ENCODE measurements at regions of chr16 and their contacts with region 1.

Region 1: GRCh38 chr16:15894571-15895374 is 6.4 kb upstream of the CEP20 start:
- DNase-seq: no peak
- H3K4me3 ChIP-seq: no peak overlapping the region
- H3K27ac ChIP-seq: no peak overlapping the region
- H3K4me1 ChIP-seq: no peaks in the 10 kb centered on the region
- H3K27me3 ChIP-seq: no peaks in the 10 kb centered on the region
- CTCF ChIP-seq: no peak
- POLR2A ChIP-seq: no peak

Region 2: DNA sequence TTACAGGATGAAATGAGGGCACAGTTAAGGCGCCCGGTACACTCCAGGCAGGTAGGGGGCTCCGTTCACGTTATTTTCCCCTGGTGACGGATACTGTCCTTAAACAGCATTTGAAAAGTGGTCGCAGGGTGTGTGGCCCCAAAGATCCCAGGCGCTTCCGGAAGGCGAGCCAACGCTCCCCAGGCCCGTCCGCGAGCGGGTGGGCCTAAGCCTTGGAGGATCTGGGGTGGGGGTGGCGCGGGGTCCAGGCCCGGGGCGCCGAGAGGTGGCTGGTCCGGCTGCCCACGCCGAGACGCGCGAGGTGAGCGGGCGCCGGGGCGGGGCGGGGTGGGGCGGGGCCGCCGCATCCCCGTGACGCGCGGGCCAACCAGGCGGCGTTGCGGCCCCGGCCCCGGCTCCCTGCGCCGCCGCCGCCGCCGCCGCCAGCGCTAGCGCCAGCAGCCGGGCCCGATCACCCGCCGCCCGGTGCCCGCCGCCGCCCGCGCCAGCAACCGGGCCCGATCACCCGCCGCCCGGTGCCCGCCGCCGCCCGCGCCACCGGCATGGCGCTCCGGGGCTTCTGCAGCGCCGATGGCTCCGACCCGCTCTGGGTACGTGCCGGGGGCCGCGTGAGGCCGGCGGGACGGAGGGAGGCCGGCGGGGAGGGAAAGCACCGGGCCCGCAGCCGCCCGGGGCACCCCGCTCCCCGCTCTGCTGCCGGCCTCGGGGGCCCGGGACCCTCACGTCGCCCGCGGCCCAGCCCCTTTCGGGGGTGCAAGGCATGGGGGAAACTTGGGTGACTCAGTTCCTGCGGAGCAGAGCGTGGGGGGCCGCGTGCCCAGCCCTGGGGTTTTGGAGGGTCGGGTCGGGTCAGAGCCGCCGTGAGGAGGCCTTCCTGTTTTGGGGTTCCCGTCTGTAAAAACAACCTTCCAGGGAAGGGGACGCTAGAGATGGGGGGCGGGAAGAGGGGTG is 54.7 kb after region 1 on chr16 and contains the start of gene ABCC1:
- intact Hi-C with region 1: loop called in 1 of 2 experiments (anchors 5 kb)
- DNase-seq: peak in 5 of 7 donors; percentile 21 to 54 (median 33)
- H3K4me3 ChIP-seq: peak within 1 kb of the TSS; percentile 29 to 99 (median 74)
- H3K27ac ChIP-seq: peak within 1 kb of the TSS; percentile 53 to 92 (median 78)
- H3K4me1 ChIP-seq: peaks cover 19 to 38% of the 10 kb centered on the region in 2 donors
- H3K27me3 ChIP-seq: no peaks in the 10 kb centered on the region
- CTCF ChIP-seq: no peak
- POLR2A ChIP-seq: no peak
- total RNA-seq, gene ABCC1: 23.2 to 38.8 (median 31.0) TPM